Activated CD4-positive, alpha-beta T cell treated with anti-CD3 and anti-CD28 coated beads for 36 hours (primary cell): ENCODE measurements at regions of chr4 and their contacts with region 1.

Region 1: DNA sequence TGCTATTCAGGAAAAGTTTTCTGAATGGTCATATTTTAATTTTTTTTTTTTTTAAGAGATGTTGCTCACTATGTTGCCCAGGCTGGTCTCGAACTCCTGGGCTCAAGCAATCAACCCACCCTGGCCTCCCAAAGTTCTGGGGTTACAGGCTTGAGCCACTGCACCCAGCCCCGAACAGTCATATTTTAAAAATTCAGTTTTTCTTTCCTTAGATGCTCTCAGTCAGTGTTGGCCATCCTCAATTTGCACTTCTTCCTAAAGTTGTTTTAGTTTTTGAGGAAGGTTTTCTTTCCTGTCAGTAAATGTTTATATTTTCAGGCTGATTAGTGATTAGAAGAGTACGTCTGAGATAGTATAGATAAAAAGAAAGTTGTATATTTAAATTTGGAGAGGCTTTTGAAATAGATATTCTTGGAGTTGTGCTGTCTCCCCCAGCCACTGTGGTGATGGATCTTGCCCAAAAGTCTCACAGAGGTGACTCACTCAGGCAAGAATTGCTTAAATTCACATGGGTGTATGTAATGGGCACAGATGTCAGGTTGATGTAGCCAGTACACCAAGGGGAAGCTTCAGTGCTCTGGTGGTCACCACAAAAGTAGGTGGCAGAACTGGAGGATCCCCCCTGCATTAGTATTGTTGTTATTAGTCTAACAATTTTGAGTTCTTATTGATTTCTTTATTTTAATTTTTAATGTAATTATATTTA is 72.2 kb upstream of the ELOVL6 start:
- DNase-seq: no peak
- ATAC-seq: no peak
- H3K4me3 Mint-ChIP-seq: no peak overlapping the region
- H3K27ac Mint-ChIP-seq: no peak overlapping the region
- H3K4me1 Mint-ChIP-seq: peaks cover 4% of the 10 kb centered on the region
- H3K27me3 Mint-ChIP-seq: peaks cover 15% of the 10 kb centered on the region

Region 2: GRCh38 chr4:110165382-110166285 is 105.0 kb before region 1 on chr4:
- CTCF ChIA-PET with region 1: no interaction called
- POLR2A ChIA-PET with region 1: interaction called, 10 read pairs
- intact Hi-C with region 1: no loop called
- DNase-seq: peak; percentile 77
- ATAC-seq: peak; percentile 100
- H3K4me3 Mint-ChIP-seq: peak overlapping the region; percentile 26
- H3K27ac Mint-ChIP-seq: peak overlapping the region; percentile 98
- H3K4me1 Mint-ChIP-seq: peaks cover 34% of the 10 kb centered on the region
- H3K27me3 Mint-ChIP-seq: no peaks in the 10 kb centered on the region

Region 3: GRCh38 chr4:110287130-110287529 is 16.5 kb after region 1 on chr4:
- CTCF ChIA-PET with region 1: no interaction called
- POLR2A ChIA-PET with region 1: no interaction called
- intact Hi-C with region 1: loop called (anchors 1 kb)
- DNase-seq: peak; percentile 39
- ATAC-seq: peak; percentile 97
- H3K4me3 Mint-ChIP-seq: no peak overlapping the region
- H3K27ac Mint-ChIP-seq: no peak overlapping the region
- H3K4me1 Mint-ChIP-seq: peaks cover 8% of the 10 kb centered on the region
- H3K27me3 Mint-ChIP-seq: peaks cover 28% of the 10 kb centered on the region

Region 4: GRCh38 chr4:110296892-110297291 is 26.2 kb after region 1 on chr4:
- CTCF ChIA-PET with region 1: no interaction called
- POLR2A ChIA-PET with region 1: interaction called, 12 read pairs
- intact Hi-C with region 1: no loop called
- DNase-seq: no peak
- ATAC-seq: peak; percentile 87
- H3K4me3 Mint-ChIP-seq: no peak overlapping the region
- H3K27ac Mint-ChIP-seq: no peak overlapping the region
- H3K4me1 Mint-ChIP-seq: peaks cover 14% of the 10 kb centered on the region
- H3K27me3 Mint-ChIP-seq: peaks cover 32% of the 10 kb centered on the region